Endothelial cell of umbilical vein (primary cell): ENCODE measurements at regions of chr1 and their contacts with region 1.

Region 1: GRCh38 chr1:203216274-203217138 is 13.0 kb downstream of the CHIT1 start:
- DNase-seq: peak; percentile 74
- H3K4me3 ChIP-seq: no peak overlapping the region
- H3K27ac ChIP-seq: no peak overlapping the region
- H3K4me1 ChIP-seq: no peaks in the 10 kb centered on the region
- H3K27me3 ChIP-seq: peaks cover 1 to 6% of the 10 kb centered on the region in 2 experiments
- CTCF ChIP-seq: peak; percentile 61 to 68
- POLR2A ChIP-seq: no peak

Region 2: GRCh38 chr1:202643397-202644218 is 572.9 kb before region 1 on chr1:
- CTCF ChIA-PET with region 1: no interaction called
- POLR2A ChIA-PET with region 1: no interaction called
- dilution Hi-C with region 1: no loop called
- intact Hi-C with region 1: no loop called
- DNase-seq: no peak
- H3K4me3 ChIP-seq: no peak overlapping the region
- H3K27ac ChIP-seq: no peak overlapping the region
- H3K4me1 ChIP-seq: no peaks in the 10 kb centered on the region
- H3K27me3 ChIP-seq: peaks cover 55 to 63% of the 10 kb centered on the region in 2 experiments
- CTCF ChIP-seq: no peak
- POLR2A ChIP-seq: no peak

Region 3: DNA sequence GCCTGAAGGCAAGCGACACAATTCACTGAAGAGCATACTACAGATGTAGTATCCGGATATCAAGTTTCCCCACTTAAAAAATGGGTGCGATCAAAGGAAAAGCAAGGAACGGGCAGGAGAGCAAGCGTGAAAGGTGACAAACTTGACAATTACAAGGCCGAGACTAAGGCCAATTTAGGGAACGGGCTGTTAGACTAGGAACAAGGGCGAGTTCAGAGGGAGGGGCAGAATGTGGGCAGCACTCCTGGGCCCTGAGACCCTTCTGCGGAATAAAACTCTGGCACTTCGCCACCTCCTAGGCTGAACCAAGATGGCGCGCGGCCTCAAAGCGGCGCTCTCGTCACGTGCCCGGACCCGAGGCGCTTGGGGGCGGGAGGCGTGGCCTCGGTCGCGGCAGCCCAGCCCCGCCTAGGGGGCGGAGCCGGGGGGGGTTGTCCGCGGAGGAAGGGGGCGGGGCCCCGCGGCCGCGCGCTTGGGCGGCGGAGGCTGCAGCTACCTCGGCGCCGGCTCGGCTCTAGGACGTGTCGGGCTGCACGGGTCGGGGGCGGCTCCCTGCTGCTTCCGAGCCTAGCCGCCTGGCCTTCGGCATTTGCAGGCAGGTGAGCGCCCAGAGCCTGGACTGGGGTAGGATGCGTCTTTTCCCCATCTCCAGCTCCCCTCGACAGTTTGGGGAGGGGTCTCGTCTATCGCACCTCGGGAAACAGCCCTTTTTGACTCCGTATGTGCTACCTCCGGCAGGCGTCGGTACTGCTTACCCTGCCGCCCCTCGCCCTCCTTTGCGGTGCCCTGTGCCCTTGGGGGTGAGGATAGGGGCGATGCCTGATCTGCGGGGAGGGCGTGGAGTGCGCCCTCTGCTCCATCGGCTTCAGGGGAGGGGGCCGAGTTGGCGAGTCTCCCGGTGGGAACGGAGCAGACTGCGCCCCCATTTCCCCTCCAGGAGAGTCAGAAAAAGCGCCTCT is 190.2 kb before region 1 on chr1 and contains the start of gene PPFIA4:
- CTCF ChIA-PET with region 1: interaction called, 21 read pairs
- POLR2A ChIA-PET with region 1: no interaction called
- dilution Hi-C with region 1: no loop called
- intact Hi-C with region 1: no loop called
- DNase-seq: peak; percentile 78
- H3K4me3 ChIP-seq: peak within 1 kb of the TSS in 2 of 3 experiments; percentile 27 to 30
- H3K27ac ChIP-seq: no peak within 1 kb of the TSS
- H3K4me1 ChIP-seq: peaks cover 6% of the 10 kb centered on the region
- H3K27me3 ChIP-seq: peaks cover 16 to 24% of the 10 kb centered on the region in 2 experiments
- CTCF ChIP-seq: no peak
- POLR2A ChIP-seq: no peak
- total RNA-seq, gene PPFIA4: 0.16 and 0.22 TPM in 2 replicates

Region 4: DNA sequence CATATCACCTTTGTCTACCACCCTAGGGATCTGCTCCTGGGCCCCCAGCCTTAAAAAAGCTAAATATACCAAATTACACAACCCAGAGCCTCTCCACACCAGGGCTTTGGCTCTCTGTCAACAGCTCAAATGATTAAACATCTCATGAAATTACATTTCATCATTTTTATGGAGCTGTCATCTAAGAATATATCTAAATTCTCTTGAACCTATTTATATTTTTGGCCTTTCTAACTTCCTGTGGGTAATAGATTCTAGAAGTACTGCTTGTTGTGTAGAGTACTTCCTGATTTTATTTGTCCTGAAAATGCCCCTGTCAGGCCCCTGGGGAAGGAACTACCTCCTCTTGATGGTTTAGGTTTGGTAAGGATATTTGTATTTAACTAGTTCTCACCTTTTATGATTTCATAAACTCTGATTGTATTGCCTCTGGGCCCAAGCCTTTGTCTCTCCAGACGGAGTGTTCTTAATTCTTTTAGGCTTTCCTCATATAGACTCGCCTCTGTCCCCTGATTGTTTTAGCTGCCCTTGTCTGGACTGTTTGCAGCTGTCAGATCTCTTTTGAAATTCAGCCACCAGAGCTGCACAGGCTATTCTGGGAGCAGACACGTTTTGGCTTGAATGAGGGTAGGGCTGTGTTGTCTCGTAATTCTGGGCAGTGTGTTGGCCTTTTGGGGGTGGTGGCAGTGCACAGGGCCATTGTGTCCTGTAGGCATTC is 147.3 kb before region 1 on chr1:
- CTCF ChIA-PET with region 1: interaction called, 10 read pairs
- POLR2A ChIA-PET with region 1: no interaction called
- dilution Hi-C with region 1: no loop called
- intact Hi-C with region 1: no loop called
- DNase-seq: no peak
- H3K4me3 ChIP-seq: no peak overlapping the region
- H3K27ac ChIP-seq: no peak overlapping the region
- H3K4me1 ChIP-seq: no peaks in the 10 kb centered on the region
- H3K27me3 ChIP-seq: peaks cover 20 to 23% of the 10 kb centered on the region in 2 experiments
- CTCF ChIP-seq: no peak
- POLR2A ChIP-seq: no peak

Region 5: DNA sequence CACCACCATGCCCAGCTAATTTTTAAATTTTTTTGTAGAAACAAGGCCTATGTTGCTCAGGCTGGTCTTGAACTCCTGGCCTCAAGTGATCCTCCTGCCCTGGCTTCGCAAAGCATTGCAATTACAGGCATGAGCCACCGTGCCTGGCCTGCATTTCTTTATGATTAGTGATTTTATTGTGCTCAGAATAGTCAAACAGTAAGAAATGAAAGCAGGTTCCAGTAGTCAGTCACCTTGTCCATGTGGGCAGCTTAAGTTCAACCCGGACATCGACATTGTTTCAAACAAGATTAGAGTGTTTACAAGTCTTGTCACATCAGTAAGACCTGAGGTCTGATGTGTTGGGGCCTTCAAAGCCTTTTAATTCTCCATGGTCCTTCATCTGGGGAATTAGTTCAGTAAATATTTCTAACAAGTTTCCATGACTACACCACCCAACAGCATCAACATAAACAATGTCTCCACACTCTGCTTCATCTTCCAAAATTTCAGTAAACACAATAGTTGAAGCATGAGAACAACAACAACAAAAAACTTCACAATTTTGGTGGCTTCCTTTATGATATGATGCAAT is 104.1 kb before region 1 on chr1:
- CTCF ChIA-PET with region 1: interaction called, 341 read pairs
- POLR2A ChIA-PET with region 1: no interaction called
- dilution Hi-C with region 1: no loop called
- intact Hi-C with region 1: loop called (anchors 1 kb)
- DNase-seq: no peak
- H3K4me3 ChIP-seq: no peak overlapping the region
- H3K27ac ChIP-seq: no peak overlapping the region
- H3K4me1 ChIP-seq: no peaks in the 10 kb centered on the region
- H3K27me3 ChIP-seq: peaks cover 35 to 36% of the 10 kb centered on the region in 2 experiments
- CTCF ChIP-seq: no peak
- POLR2A ChIP-seq: no peak

Region 6: GRCh38 chr1:203152158-203153035 is 64.1 kb before region 1 on chr1:
- CTCF ChIA-PET with region 1: interaction called, 12 read pairs
- POLR2A ChIA-PET with region 1: no interaction called
- dilution Hi-C with region 1: no loop called
- intact Hi-C with region 1: no loop called
- DNase-seq: peak; percentile 8
- H3K4me3 ChIP-seq: no peak overlapping the region
- H3K27ac ChIP-seq: peak overlapping the region; percentile 62
- H3K4me1 ChIP-seq: peaks cover 28% of the 10 kb centered on the region
- H3K27me3 ChIP-seq: peaks cover 0 to 4% of the 10 kb centered on the region in 2 experiments
- CTCF ChIP-seq: no peak
- POLR2A ChIP-seq: no peak

Region 7: DNA sequence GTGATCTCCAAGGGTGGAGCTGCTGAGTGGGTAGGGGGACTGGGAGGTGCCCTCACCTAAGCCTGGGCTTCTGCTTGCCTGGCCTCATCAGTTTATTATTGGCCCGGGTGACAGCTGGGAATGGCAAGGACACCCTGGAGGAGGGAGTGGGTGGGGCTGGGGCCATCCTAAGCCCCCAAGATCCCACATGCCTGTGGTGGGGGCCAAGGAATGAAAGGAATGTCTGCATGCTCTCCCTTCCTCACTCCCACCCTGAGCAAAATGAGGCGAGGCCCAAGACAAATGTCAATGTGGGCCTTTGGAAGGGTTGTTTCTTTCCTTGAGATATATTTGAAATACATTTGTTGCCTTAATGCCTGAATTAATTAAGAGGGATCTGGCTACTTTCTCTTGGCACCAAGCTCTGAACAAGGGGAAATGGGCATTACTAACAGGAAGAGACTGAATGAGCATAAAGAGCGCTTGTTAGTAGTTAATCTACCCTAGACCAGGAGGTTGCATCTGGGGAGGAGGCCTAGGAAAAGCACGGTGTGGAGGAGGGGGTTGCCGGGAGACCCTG is 10.3 kb before region 1 on chr1:
- CTCF ChIA-PET with region 1: interaction called, 35 read pairs
- POLR2A ChIA-PET with region 1: no interaction called
- dilution Hi-C with region 1: no loop called
- intact Hi-C with region 1: no loop called
- DNase-seq: peak; percentile 13
- H3K4me3 ChIP-seq: no peak overlapping the region
- H3K27ac ChIP-seq: no peak overlapping the region
- H3K4me1 ChIP-seq: no peaks in the 10 kb centered on the region
- H3K27me3 ChIP-seq: peaks cover 2 to 14% of the 10 kb centered on the region in 2 experiments
- CTCF ChIP-seq: no peak
- POLR2A ChIP-seq: no peak